ENCODE measurements at regions of chr3 and their contacts with region 1.

Region 1: DNA sequence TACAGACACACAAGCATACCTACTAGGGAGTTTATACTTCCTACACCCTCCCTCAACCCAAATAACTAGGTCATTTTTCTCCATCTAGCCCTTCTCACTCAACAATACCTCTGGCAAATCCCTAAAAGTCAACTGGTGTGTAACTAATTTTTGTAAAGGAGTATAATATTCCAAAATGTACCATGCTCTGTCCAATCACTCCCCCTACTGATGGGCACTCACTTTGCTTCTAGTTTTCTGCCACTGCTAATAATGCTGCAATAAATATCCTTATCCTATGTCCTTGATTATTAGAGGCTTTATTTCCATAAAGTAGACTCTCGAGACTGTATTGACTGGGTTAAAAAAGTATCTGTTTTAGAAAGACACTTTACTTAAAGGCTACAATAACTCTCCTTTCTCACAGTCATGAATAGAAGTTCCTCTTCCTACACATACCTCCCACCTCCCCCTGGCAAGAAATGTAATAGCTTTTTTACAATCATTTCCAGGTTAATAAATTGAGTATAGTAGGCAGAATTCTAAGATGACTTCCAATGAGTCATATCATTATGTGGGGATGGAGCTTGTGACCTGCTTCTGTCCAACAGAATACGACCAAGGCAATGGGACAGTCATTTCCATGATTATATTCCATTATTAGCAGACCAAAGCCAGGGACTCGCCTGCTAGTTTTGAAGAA is 30.0 kb downstream of the SHQ1 start:
- DNase-seq: no peak
- ATAC-seq: no peak
- H3K4me3 ChIP-seq: no peak overlapping the region
- H3K27ac ChIP-seq: no peak overlapping the region
- H3K4me1 ChIP-seq: peaks cover 4% of the 10 kb centered on the region
- H3K27me3 ChIP-seq: no peaks in the 10 kb centered on the region

Region 2: GRCh38 chr3:71725279-71725991 is 1092.8 kb before region 1 on chr3 and contains the start of gene EIF4E3:
- intact Hi-C with region 1: loop called in 3 of 4 experiments (anchors 10 kb)
- DNase-seq: peak; percentile 45 to 79 (median 71)
- ATAC-seq: peak; percentile 64 to 68
- H3K4me3 ChIP-seq: peak within 1 kb of the TSS; percentile 85
- H3K27ac ChIP-seq: peak within 1 kb of the TSS; percentile 58
- H3K4me1 ChIP-seq: peaks cover 7% of the 10 kb centered on the region
- H3K27me3 ChIP-seq: no peaks in the 10 kb centered on the region
- total RNA-seq, gene EIF4E3: 40.7 to 42.5 (median 41.1) TPM

Region 3: GRCh38 chr3:71875461-71875947 is 942.7 kb before region 1 on chr3:
- intact Hi-C with region 1: loop called (anchors 2 to 10 kb)
- DNase-seq: peak; percentile 71 to 87 (median 81)
- ATAC-seq: peak; percentile 93 to 94
- H3K4me3 ChIP-seq: no peak overlapping the region
- H3K27ac ChIP-seq: no peak overlapping the region
- H3K4me1 ChIP-seq: no peaks in the 10 kb centered on the region
- H3K27me3 ChIP-seq: no peaks in the 10 kb centered on the region

Region 4: DNA sequence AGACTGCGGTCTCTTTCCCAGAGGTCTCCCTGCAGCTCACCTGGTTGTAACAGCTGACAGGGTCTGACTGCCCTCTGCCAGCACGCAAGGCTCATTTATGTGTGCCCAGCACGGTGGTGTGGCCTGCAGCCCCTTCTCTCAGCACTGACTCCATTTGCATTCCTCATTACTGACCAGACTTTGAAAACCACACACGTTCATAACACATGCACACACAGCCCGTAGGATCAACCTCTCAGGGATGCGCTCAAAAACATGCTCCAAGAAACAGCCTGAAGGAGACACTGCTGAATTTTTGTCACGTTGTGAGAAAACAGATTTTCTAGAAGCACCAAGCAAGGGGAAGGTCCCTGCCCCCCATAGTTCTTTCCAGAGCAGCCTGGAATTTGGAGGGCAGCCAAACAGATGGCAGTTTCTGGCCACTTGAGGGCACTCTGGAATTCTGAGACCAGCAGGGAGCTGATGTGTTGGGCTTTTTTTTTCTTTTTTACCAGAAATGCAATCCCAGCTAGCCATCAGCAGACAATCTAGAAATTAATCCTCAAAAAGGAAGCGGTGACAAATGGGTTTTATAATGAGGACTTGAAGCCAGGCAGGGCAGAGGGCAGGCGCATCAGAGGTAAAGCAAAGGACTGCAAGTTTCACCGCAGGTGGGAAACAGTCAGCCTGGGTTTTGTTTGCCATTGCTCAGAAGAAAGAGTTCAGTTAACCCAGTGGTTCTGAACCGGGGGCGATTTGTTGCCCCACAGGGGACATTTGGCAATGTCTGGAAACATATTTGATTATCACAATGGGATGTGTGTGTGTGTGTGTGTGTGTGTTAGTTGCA is 862.8 kb before region 1 on chr3:
- intact Hi-C with region 1: loop called in 3 of 4 experiments (anchors 5 to 10 kb)
- DNase-seq: peak; percentile 69 to 90 (median 86)
- ATAC-seq: peak; percentile 68 to 76
- H3K4me3 ChIP-seq: no peak overlapping the region
- H3K27ac ChIP-seq: no peak overlapping the region
- H3K4me1 ChIP-seq: peaks cover 2% of the 10 kb centered on the region
- H3K27me3 ChIP-seq: no peaks in the 10 kb centered on the region

Region 5: DNA sequence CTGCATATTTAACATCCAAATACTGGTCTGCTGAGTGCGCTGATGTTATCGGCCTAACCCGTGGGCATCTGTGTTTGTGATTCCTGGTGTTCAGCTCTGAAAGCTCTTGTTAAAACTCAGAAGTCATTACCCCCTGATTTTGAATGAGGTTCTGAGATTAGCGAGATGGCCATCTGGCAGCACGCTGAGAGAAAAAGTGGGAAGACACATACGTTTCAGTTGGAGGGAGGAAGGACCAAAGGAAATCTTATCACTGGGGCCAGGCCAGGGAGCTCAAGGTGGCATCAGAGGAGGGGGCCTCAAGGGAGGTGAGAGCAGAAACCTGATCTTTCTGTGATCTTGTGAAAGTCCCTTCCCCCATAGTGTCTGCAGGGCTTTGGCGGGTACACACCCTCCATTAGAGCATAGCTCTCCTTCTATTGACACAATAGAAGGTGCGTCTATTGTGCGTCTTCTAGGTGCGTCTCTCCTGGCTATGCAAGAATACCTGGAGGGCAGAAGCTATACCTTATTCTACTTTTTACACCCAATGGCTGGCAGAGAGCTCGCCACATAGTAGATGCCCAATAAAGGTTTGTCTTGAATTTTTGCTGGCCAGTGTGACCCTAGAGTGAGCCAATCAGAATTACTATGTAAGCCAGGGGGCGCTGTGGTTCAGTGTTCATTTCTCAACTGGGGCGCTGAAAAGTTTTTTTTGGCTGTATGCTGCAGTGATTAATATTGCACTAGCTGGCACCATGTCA is 152.4 kb before region 1 on chr3:
- intact Hi-C with region 1: loop called in 3 of 4 experiments (anchors 10 kb)
- DNase-seq: peak in 1 of 3 donors; percentile 41
- ATAC-seq: peak in 1 of 2 donors; percentile 40
- H3K4me3 ChIP-seq: no peak overlapping the region
- H3K27ac ChIP-seq: no peak overlapping the region
- H3K4me1 ChIP-seq: no peaks in the 10 kb centered on the region
- H3K27me3 ChIP-seq: no peaks in the 10 kb centered on the region

Region 6: GRCh38 chr3:72679540-72680198 is 138.6 kb before region 1 on chr3:
- intact Hi-C with region 1: loop called in 2 of 4 experiments (anchors 10 kb)
- DNase-seq: no peak
- ATAC-seq: no peak
- H3K4me3 ChIP-seq: no peak overlapping the region
- H3K27ac ChIP-seq: no peak overlapping the region
- H3K4me1 ChIP-seq: no peaks in the 10 kb centered on the region
- H3K27me3 ChIP-seq: no peaks in the 10 kb centered on the region